ENCODE measurements at regions of chr11 and their contacts with region 1.

Region 1: GRCh38 chr11:910589-911195 is at the start of gene CHID1:
- H3K4me3 Mint-ChIP-seq: peak within 1 kb of the TSS; percentile 92
- H3K27ac Mint-ChIP-seq: peak within 1 kb of the TSS; percentile 91
- H3K4me1 Mint-ChIP-seq: peaks cover 73% of the 10 kb centered on the region
- H3K27me3 Mint-ChIP-seq: no peaks in the 10 kb centered on the region

Region 2: DNA sequence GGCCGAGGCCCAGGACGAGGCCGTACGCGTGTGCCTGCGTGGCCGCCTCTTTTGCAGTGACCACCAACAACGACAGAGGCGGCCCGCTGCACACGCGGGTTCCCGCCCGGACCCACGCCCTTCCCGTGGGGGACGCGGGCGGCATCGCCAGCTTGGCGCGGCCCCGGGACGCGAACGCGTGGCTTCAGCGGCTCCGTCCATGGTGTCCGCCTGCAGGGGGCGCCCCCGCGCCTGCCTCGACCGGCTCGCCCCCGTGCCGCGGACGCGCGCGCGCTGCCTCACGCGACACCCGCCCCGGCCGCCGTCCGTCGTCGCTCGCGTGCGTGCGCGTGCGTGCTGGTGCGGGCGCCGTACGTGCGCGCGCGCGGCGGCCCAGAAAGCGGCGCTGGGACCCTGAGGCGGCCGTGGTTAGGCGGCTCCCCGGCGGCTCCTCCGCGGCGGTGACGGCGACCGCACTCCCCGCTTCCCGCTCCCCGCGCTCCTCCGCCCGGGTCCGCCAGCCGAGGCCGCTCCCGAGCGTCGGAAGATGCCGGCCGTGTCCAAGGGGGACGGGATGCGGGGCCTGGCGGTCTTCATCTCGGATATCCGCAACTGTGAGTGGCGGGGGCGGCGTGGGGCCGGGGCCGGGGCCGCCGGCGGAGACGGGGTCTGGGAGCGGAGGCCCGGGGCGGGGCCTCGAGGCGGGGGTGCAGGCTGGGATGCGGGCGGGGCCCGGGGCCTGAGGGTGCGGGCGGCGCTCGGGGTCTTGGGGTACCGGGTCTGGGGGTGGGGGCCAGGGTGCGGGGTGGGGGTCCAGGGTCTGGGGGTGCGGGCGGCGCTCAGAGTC is 15.0 kb after region 1 on chr11 and contains the start of gene AP2A2:
- intact Hi-C with region 1: loop called (anchors 2 kb)
- H3K4me3 Mint-ChIP-seq: peak within 1 kb of the TSS; percentile 84
- H3K27ac Mint-ChIP-seq: peak within 1 kb of the TSS; percentile 95
- H3K4me1 Mint-ChIP-seq: peaks cover 46% of the 10 kb centered on the region
- H3K27me3 Mint-ChIP-seq: no peaks in the 10 kb centered on the region

Region 3: DNA sequence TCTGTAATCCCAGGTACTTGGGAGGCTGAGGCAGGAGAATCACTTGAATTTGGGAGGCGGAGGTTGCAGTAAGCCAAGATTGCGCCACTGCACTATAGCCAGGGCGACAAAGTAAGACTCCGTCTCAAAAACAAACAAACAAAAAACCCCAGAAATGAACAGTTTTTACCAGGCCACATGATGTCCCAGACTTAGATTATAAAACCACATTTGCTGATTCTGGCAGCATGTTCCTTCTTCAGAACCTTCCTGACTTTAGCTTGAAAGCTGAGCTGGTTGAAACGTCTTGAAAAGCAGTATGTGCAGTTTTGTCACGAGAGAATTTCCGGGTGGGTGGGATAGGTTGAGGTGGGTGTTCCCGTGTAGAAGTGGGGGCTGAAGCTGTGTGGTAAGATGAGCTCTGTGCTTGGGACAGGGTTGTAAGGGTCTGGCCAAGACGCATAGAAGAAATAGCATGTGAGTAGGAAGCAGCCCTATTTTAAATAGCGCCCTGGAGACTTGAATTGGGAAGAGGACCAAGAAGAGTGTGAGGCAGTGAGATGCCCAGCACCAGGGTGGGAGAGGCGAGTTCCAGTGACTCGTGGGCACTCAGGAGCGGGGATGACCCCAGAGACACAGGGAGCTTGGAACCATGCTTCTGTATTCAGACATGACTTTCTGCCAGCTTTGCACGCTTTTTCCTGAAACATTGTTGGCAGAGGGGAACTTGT is 22.6 kb after region 1 on chr11:
- intact Hi-C with region 1: loop called (anchors 2 kb)
- H3K4me3 Mint-ChIP-seq: peak overlapping the region; percentile 91
- H3K27ac Mint-ChIP-seq: peak overlapping the region; percentile 97
- H3K4me1 Mint-ChIP-seq: peaks cover 65% of the 10 kb centered on the region
- H3K27me3 Mint-ChIP-seq: no peaks in the 10 kb centered on the region

Measured in dendritic cell treated with granulocyte-macrophage colony-stimulating factor and Interleukin-4, amounts not matched to agents 40 ng/mL and 50 ng/mL, for 4 days (primary cell).